ENCODE measurements at regions of chr7 and their contacts with region 1.

Region 1: GRCh38 chr7:50632561-50633413 is 67.6 kb upstream of the DDC start:
- DNase-seq: peak; percentile 55
- H3K4me3 ChIP-seq: no peak overlapping the region
- H3K27ac ChIP-seq: no peak overlapping the region
- H3K4me1 ChIP-seq: no peaks in the 10 kb centered on the region
- CTCF ChIP-seq: peak; percentile 93

Region 2: DNA sequence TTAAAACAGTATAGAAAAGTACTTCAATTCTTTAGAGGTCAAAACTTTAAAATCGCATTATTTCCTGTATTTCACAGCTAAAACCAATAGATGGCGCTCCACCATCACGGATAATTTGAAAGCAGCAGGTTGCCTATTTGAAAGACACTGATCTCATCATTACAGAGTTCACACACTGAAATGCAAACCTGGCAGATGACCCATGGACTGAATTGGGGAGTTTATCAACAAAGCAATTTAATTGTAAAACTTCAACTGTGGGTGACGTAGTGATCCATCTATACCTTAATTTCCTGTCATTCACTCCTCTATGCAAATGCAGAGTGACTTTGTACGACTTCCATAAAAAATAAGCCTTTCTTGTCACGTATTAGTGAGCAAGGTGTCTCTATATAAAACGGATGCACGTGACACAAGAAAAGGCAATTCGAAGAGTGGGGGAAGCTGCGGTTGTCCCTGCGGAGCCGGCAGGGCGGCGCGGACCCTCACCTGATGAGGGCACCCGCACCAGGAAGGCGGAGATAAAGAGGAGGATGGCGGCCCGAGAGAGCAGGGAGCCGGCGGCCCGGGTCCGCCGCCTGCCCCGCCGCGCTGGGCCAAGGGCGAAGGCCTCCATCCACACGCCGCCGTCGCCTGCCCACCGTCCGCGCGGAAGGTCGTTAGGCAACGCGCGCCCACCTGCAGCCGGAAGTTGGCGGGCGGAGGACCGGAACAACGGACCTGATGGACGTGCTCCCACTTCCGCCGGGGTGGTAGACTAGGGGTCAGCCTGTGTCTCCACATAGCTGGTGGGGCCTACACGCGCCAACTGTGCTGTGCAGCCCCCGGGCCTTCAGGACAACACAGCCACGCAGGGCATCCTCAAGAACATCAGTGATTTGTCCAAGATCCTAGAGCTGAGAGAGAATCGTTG is 540.0 kb before region 1 on chr7 and contains the start of gene ZPBP:
- CTCF ChIA-PET with region 1: interaction called, 4 read pairs
- POLR2A ChIA-PET with region 1: no interaction called
- intact Hi-C with region 1: loop called (anchors 1 kb)
- DNase-seq: peak; percentile 69
- H3K4me3 ChIP-seq: no peak within 1 kb of the TSS
- H3K27ac ChIP-seq: no peak within 1 kb of the TSS
- H3K4me1 ChIP-seq: peaks cover 5% of the 10 kb centered on the region
- CTCF ChIP-seq: peak; percentile 99
- total RNA-seq, gene ZPBP: not detected in 2 replicates

Region 3: GRCh38 chr7:50467817-50468610 is 164.8 kb before region 1 on chr7:
- CTCF ChIA-PET with region 1: no interaction called
- POLR2A ChIA-PET with region 1: no interaction called
- intact Hi-C with region 1: loop called (anchors 2 kb)
- DNase-seq: peak; percentile 61
- H3K4me3 ChIP-seq: no peak overlapping the region
- H3K27ac ChIP-seq: no peak overlapping the region
- H3K4me1 ChIP-seq: no peaks in the 10 kb centered on the region
- CTCF ChIP-seq: peak; percentile 86

Region 4: DNA sequence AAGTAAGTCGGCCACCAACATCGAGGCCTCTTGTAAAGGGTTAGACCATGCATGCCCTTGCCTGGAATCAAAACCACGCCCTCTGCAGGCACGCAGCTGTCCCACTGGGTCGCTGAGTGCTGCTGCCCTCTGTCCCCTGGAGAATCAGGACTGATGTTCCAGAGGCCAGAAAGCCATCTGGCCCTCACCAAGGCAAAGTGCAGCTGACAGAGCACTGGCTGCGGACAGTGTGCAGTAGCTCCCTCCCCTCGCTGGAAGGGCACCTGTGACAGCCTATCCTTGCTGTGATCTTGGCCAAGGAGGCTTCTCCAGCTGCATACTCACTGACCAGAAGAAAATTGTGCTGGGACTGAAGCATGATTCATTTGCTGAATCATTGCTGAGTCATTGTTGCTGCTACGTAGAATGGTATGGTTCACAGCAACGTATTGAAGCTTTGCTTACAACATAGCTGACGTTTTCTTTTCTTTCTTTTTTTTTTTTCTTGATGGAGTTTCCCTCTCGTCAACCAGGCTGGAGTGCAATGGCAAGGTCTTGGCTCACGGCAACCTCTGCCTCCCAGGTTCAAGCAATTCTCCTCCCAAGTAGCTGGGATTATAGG is 98.0 kb before region 1 on chr7:
- CTCF ChIA-PET with region 1: no interaction called
- POLR2A ChIA-PET with region 1: no interaction called
- intact Hi-C with region 1: no loop called
- DNase-seq: no peak
- H3K4me3 ChIP-seq: no peak overlapping the region
- H3K27ac ChIP-seq: no peak overlapping the region
- H3K4me1 ChIP-seq: no peaks in the 10 kb centered on the region
- CTCF ChIP-seq: no peak

Region 5: DNA sequence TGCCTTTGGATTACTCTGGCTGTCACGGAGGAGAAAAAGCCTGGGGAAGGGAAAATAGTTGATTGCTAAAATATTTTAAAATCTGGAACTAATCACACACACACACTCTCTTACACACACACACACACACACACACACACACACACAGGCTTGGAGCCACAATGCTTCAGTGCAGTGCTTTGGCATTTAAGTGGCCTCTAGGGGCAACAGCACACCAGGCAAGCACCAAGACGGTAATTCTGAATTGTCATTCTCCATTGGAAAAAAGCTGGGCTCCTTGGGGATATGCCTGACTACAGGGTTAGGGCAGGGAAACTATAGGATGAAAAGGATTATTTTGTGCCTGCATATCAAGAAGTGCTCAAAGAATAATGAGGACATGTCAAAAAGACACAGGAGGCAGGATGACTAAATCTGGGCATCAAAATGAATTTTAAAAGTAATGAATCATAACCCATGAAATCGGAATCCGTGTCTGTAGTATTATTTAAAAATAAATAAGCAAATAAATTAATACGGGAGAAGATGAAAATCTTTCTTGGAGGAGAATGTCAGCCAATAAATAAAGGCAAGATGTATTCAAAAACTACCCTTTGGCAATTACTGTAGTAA is 37.2 kb before region 1 on chr7:
- CTCF ChIA-PET with region 1: no interaction called
- POLR2A ChIA-PET with region 1: no interaction called
- intact Hi-C with region 1: no loop called
- DNase-seq: peak; percentile 28
- H3K4me3 ChIP-seq: no peak overlapping the region
- H3K27ac ChIP-seq: no peak overlapping the region
- H3K4me1 ChIP-seq: no peaks in the 10 kb centered on the region
- CTCF ChIP-seq: peak; percentile 65